ENCODE measurements at regions of chr1 and their contacts with region 1.

Region 1: GRCh38 chr1:3890389-3891328 is 9.4 kb downstream of the C1orf174 start:
- DNase-seq: peak in 1 of 2 donors; percentile 35
- ATAC-seq: no peak
- H3K4me3 ChIP-seq: no peak overlapping the region
- H3K27ac ChIP-seq: no peak overlapping the region
- H3K4me1 ChIP-seq: peaks cover 9% of the 10 kb centered on the region
- H3K27me3 ChIP-seq: no peaks in the 10 kb centered on the region
- CTCF ChIP-seq: no peak

Region 2: GRCh38 chr1:3856908-3857790 is 33.5 kb before region 1 on chr1 and contains the starts of genes CEP104 and DFFB:
- intact Hi-C with region 1: loop called in 1 of 2 experiments (anchors 5 kb)
- DNase-seq: peak; percentile 89 to 96
- ATAC-seq: peak; percentile 94 to 98 (median 96)
- H3K4me3 ChIP-seq: peak within 1 kb of the TSS; percentile 98
- H3K27ac ChIP-seq: peak within 1 kb of the TSS; percentile 84
- H3K4me1 ChIP-seq: peaks cover 20% of the 10 kb centered on the region
- H3K27me3 ChIP-seq: no peaks in the 10 kb centered on the region
- CTCF ChIP-seq: peak; percentile 15
- total RNA-seq, gene CEP104: 28.3 to 37.7 (median 34.4) TPM
- total RNA-seq, gene DFFB: 1.1 to 2.4 (median 1.8) TPM

Measured in psoas muscle (tissue), 8 donors.